CD4-positive, alpha-beta memory T cell (primary cell): ENCODE measurements at regions of chr2 and their contacts with region 1.

Region 1: DNA sequence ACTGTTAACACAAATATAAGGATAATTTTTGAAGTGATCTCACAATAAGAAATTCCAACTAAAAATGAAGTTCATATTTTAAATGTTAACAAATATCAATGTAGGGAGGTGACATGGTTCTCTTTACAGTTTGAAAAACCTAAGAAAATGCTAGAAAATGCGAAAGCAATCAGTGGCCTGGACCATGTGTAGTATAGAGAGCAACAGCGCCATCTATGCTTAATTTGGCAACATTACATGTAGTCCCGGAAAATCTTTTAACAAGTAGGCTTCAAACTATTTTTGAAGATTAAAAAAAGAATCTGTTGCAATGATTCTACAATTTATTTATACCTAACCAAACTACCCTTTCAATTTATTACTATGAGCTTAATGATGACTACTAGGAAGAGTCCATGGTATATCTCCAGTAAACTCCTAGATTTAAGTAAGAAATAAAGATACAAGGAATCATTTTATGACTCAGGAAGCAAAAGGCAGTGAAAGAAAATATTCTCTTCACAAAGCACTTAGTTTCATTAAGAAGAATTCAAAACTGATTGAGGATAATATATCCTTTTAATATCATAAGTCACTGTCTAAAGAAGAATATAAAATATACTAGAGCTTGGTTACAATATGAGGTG is 33.3 kb downstream of the NDUFA10 start:
- DNase-seq: peak in 4 of 5 donors; percentile 42 to 52 (median 46)
- H3K4me3 ChIP-seq: no peak overlapping the region
- H3K4me3 Mint-ChIP-seq: no peak overlapping the region
- H3K27ac ChIP-seq: no peak overlapping the region
- H3K27ac Mint-ChIP-seq: no peak overlapping the region
- H3K4me1 ChIP-seq: no peaks in the 10 kb centered on the region
- H3K4me1 Mint-ChIP-seq: peaks cover 0 to 6% (median 0%) of the 10 kb centered on the region in 4 donors
- H3K27me3 ChIP-seq: no peaks in the 10 kb centered on the region
- H3K27me3 Mint-ChIP-seq: no peaks in the 10 kb centered on the region

Region 2: GRCh38 chr2:239035361-239036078 is 956.3 kb before region 1 on chr2:
- CTCF ChIA-PET with region 1: interaction called, 4 read pairs
- POLR2A ChIA-PET with region 1: interaction called, 3 read pairs
- intact Hi-C with region 1: loop called (anchors 1 kb)
- DNase-seq: peak; percentile 46 to 63 (median 54)
- H3K4me3 ChIP-seq: no peak overlapping the region
- H3K4me3 Mint-ChIP-seq: no peak overlapping the region
- H3K27ac ChIP-seq: no peak overlapping the region
- H3K27ac Mint-ChIP-seq: no peak overlapping the region
- H3K4me1 ChIP-seq: no peaks in the 10 kb centered on the region
- H3K4me1 Mint-ChIP-seq: no peaks in the 10 kb centered on the region
- H3K27me3 ChIP-seq: no peaks in the 10 kb centered on the region
- H3K27me3 Mint-ChIP-seq: peaks cover 3 to 8% of the 10 kb centered on the region in 2 donors

Region 3: DNA sequence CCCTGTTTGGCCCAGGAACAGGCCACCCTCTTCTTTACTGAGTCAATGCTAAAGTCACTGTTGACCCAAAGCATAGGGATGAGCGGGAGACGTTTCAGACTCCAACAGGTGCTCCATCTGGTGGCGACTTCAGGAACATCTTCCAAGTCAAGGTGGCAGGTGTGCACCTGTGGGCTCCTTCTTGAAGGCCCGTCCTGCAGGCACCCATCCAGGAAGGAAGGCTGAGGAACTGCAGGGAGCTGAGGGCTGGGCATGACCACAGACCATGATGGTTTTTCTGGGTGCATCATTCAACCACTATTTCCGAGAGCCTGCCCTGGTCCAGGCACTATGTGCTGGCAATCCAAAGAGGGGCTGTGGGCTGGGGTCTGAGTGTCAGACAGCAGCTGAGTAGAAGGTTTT is 109.5 kb before region 1 on chr2:
- CTCF ChIA-PET with region 1: interaction called, 4 read pairs
- POLR2A ChIA-PET with region 1: no interaction called
- intact Hi-C with region 1: loop called (anchors 2 kb)
- DNase-seq: peak; percentile 50 to 67 (median 56)
- H3K4me3 ChIP-seq: no peak overlapping the region
- H3K4me3 Mint-ChIP-seq: peak overlapping the region in 1 of 8 donors; percentile 3
- H3K27ac ChIP-seq: no peak overlapping the region
- H3K27ac Mint-ChIP-seq: peak overlapping the region in 2 of 7 donors; percentile 5 to 67
- H3K4me1 ChIP-seq: peaks cover 8% of the 10 kb centered on the region
- H3K4me1 Mint-ChIP-seq: peaks cover 6 to 13% (median 8%) of the 10 kb centered on the region in 4 donors
- H3K27me3 ChIP-seq: no peaks in the 10 kb centered on the region
- H3K27me3 Mint-ChIP-seq: peaks cover 1 to 4% of the 10 kb centered on the region in 2 donors

Region 4: GRCh38 chr2:239934571-239935171 is 57.1 kb before region 1 on chr2:
- CTCF ChIA-PET with region 1: interaction called, 22 read pairs
- POLR2A ChIA-PET with region 1: no interaction called
- intact Hi-C with region 1: loop called (anchors 2 kb)
- DNase-seq: peak; percentile 51 to 59 (median 54)
- H3K4me3 ChIP-seq: no peak overlapping the region
- H3K4me3 Mint-ChIP-seq: peak overlapping the region in 5 of 8 donors; percentile 4 to 63 (median 52)
- H3K27ac ChIP-seq: no peak overlapping the region
- H3K27ac Mint-ChIP-seq: peak overlapping the region in 4 of 7 donors; percentile 41 to 83 (median 62)
- H3K4me1 ChIP-seq: no peaks in the 10 kb centered on the region
- H3K4me1 Mint-ChIP-seq: peaks cover 5 to 10% (median 6%) of the 10 kb centered on the region in 4 donors
- H3K27me3 ChIP-seq: no peaks in the 10 kb centered on the region
- H3K27me3 Mint-ChIP-seq: no peaks in the 10 kb centered on the region

Region 5: GRCh38 chr2:239944694-239945551 is 46.9 kb before region 1 on chr2:
- CTCF ChIA-PET with region 1: interaction called, 26 read pairs
- POLR2A ChIA-PET with region 1: no interaction called
- intact Hi-C with region 1: no loop called
- DNase-seq: peak; percentile 19 to 54 (median 30)
- H3K4me3 ChIP-seq: peak overlapping the region in 1 of 2 donors; percentile 35
- H3K4me3 Mint-ChIP-seq: peak overlapping the region; percentile 44 to 89 (median 73)
- H3K27ac ChIP-seq: peak overlapping the region; percentile 15
- H3K27ac Mint-ChIP-seq: peak overlapping the region in 6 of 7 donors; percentile 43 to 86 (median 70)
- H3K4me1 ChIP-seq: peaks cover 19% of the 10 kb centered on the region
- H3K4me1 Mint-ChIP-seq: peaks cover 5 to 23% (median 9%) of the 10 kb centered on the region in 4 donors
- H3K27me3 ChIP-seq: no peaks in the 10 kb centered on the region
- H3K27me3 Mint-ChIP-seq: no peaks in the 10 kb centered on the region

Region 6: GRCh38 chr2:239979243-239980023 is 12.4 kb before region 1 on chr2:
- CTCF ChIA-PET with region 1: interaction called, 17 read pairs
- POLR2A ChIA-PET with region 1: no interaction called
- intact Hi-C with region 1: no loop called
- DNase-seq: no peak
- H3K4me3 ChIP-seq: no peak overlapping the region
- H3K4me3 Mint-ChIP-seq: no peak overlapping the region
- H3K27ac ChIP-seq: no peak overlapping the region
- H3K27ac Mint-ChIP-seq: peak overlapping the region in 1 of 7 donors; percentile 42
- H3K4me1 ChIP-seq: no peaks in the 10 kb centered on the region
- H3K4me1 Mint-ChIP-seq: peaks cover 4 to 17% (median 6%) of the 10 kb centered on the region in 4 donors
- H3K27me3 ChIP-seq: no peaks in the 10 kb centered on the region
- H3K27me3 Mint-ChIP-seq: no peaks in the 10 kb centered on the region

Region 7: GRCh38 chr2:240013343-240013742 is 21.5 kb after region 1 on chr2:
- CTCF ChIA-PET with region 1: interaction called, 12 read pairs
- POLR2A ChIA-PET with region 1: no interaction called
- intact Hi-C with region 1: no loop called
- DNase-seq: no peak
- H3K4me3 ChIP-seq: no peak overlapping the region
- H3K4me3 Mint-ChIP-seq: no peak overlapping the region
- H3K27ac ChIP-seq: no peak overlapping the region
- H3K27ac Mint-ChIP-seq: no peak overlapping the region
- H3K4me1 ChIP-seq: no peaks in the 10 kb centered on the region
- H3K4me1 Mint-ChIP-seq: peaks cover 0 to 5% (median 3%) of the 10 kb centered on the region in 4 donors
- H3K27me3 ChIP-seq: no peaks in the 10 kb centered on the region
- H3K27me3 Mint-ChIP-seq: no peaks in the 10 kb centered on the region